AG04450 (cell line): ENCODE measurements at regions of chr10 and their contacts with region 1.

Region 1: DNA sequence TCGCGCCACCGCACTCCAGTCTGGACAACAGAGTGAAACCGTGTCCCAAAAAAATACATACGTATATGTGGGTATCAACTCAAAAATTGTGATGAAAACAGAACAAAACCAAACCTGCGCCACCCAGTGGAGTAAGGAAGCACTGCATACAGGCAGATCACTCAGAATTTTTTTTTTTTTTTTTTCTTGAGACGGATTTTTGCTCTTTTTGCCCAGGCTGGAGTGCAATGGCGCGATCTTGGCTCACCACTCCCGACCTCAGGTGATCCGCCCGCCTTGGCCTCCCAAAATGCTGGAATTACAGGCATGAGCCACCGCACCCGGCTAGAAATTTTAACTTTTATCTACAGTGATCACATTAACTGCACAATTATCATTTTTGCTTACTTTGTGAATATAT is 9.1 kb upstream of the TMEM236 start:
- DNase-seq: peak; percentile 15
- H3K4me3 ChIP-seq: peak overlapping the region; percentile 29; the same call in 1 of the 2 replicates
- H3K27ac ChIP-seq: no peak overlapping the region
- H3K27me3 ChIP-seq: no peaks in the 10 kb centered on the region
- CTCF ChIP-seq: peak; percentile 86

Region 2: DNA sequence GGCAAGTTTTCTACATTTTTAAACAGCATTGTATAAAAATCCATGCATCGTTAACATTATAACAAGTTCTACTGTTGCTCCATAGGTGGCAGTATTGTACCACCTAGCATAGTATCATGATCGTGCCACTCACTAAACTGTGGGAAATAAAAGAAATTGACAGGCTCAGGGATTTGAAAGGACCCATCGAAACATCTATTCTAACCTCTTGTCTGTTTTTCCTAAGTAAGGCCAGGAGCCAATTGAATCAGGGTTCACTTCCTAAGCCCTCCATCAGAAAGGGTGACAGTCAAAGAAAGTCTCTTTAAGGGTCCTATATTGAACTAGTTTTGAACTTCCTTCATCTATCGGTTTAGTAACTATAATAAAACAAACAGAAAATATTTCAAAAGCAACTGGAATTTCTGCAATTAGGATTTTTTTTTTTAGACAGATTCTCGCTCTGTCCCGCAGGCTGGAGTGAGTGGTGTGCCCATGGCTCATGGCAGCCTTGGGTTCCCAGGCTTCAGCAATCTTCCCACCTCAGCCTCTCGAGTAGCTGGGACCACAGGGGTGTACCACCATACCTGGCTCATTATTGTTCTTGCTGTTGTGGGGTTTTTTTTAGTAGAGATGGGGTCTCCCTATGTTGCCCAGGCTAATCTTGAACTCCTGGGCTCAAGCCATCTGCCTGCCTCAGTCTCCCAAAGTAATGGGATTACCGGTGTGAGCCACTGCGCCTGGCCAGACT is 135.2 kb before region 1 on chr10:
- CTCF ChIA-PET with region 1: interaction called, 14 read pairs
- POLR2A ChIA-PET with region 1: no interaction called
- DNase-seq: peak; percentile 27
- H3K4me3 ChIP-seq: no peak overlapping the region
- H3K27ac ChIP-seq: no peak overlapping the region
- H3K27me3 ChIP-seq: no peaks in the 10 kb centered on the region
- CTCF ChIP-seq: peak; percentile 90